Gastrocnemius medialis (tissue), 4 donors: ENCODE measurements at regions of chr12 and their contacts with region 1.

Region 1: GRCh38 chr12:65881965-65882413 is 57.7 kb downstream of the HMGA2 start:
- DNase-seq: peak; percentile 73 to 81
- ATAC-seq: peak; percentile 80 to 82
- H3K4me3 ChIP-seq: peak overlapping the region; percentile 32 to 43 (median 41)
- H3K27ac ChIP-seq: peak overlapping the region in 3 of 4 donors; percentile 55 to 64 (median 63)
- H3K4me1 ChIP-seq: peaks cover 8 to 14% of the 10 kb centered on the region in 2 donors
- H3K27me3 ChIP-seq: no peaks in the 10 kb centered on the region
- CTCF ChIP-seq: peak in 2 of 5 experiments; percentile 20 to 28
- POLR2A ChIP-seq: no peak

Region 2: GRCh38 chr12:65536876-65537661 is 344.9 kb before region 1 on chr12:
- in situ Hi-C with region 1: no loop called
- intact Hi-C with region 1: no loop called
- DNase-seq: no peak
- ATAC-seq: peak in 1 of 2 donors; percentile 47
- H3K4me3 ChIP-seq: no peak overlapping the region
- H3K27ac ChIP-seq: peak overlapping the region in 2 of 4 donors; percentile 2 to 36
- H3K4me1 ChIP-seq: no peaks in the 10 kb centered on the region
- H3K27me3 ChIP-seq: no peaks in the 10 kb centered on the region
- CTCF ChIP-seq: no peak
- POLR2A ChIP-seq: no peak

Region 3: DNA sequence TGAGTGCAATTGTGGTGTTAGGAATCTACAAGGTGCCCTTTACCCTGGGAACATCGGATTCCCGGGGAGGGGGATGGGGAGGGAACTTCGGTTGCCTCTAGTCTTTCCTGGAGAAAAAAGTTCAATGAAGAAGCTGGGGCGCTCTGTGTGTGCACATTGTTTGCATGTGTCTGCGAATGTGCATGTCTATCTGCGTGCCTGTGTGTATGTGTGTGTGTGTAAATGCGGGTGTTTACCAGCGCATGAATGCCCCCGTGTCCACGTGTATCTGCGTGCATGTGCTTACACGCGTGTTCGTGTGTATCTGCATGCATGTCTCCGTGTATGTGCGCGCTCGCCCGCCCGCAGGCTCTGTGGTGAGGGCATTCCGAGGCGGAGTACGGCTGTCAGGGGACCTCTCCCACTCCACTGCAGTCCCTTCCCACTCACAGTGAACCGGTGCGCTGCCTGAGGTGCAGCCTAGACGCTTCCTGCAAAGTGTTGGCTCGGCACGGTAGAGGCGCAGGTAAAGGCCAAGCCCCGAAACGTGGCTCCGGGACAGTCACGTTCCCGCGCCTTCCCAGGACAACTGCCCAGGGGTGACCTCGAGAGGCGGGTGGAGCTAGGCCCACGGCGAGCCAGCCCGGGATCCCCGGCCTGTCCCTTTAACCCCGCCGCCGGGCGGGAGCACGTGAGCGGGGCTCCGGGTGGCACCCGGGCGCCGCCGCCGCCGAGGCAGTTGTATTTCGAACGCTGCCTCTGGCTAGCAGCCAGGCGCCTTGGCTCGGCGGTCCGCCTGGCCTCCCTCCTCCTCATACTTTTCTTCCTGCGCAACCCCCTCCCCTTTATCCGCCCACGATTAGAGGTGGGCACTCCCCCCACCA is 58.2 kb before region 1 on chr12:
- in situ Hi-C with region 1: no loop called
- intact Hi-C with region 1: loop called (anchors 10 kb)
- DNase-seq: no peak
- ATAC-seq: peak in 1 of 2 donors; percentile 30
- H3K4me3 ChIP-seq: peak overlapping the region; percentile 54 to 73 (median 54)
- H3K27ac ChIP-seq: no peak overlapping the region
- H3K4me1 ChIP-seq: peaks cover 18 to 23% of the 10 kb centered on the region in 2 donors
- H3K27me3 ChIP-seq: peaks cover 76 to 90% (median 87%) of the 10 kb centered on the region in 3 donors
- CTCF ChIP-seq: no peak
- POLR2A ChIP-seq: no peak